Posterior cingulate gyrus (tissue), 11 donors: ENCODE measurements at regions of chr16 and their contacts with region 1.

Region 1: DNA sequence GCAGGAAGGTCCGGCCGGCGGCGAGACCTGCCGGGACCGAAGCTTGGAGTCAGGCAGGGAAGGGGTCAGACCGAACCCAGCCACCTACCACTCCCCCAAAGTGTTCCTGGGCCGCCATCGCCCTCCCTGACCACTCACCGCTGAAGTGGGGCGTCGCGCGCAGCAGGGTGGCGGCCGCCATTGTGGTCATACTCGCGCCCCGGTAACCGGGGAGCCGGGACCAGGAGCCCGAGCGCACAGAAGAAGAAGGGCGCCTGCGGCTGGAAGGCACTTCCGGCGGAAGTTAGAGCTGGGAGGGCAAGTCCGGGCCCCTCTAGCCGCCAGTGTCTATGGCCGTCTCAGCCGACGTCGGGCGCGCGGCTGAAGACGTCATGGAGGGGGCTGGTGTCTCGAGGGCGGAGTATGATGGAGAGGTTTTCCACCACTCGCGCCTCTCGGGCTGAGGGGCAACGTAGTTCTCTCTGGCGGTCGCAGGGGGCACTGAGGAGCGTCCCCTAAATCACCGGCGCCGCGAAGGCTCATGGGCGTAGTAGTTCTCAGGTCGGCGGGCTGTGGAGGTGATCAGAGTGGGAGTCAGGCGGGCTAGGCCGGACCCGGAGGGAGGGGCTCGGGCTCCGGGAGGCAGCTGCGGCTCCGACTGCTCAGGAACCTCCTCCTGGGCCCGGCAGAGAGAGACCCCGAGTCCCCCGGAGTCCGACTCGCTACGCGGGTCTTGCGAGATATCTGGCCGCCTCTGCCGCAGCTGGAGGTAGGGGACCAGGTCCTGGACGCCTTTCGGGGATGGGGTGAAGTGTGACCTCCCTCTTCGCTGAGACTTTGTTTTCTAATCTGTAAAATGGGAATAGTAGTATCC is at the start of gene TUFM:
- DNase-seq: peak; percentile 98 to 100 (median 99)

Region 2: GRCh38 chr16:28211712-28212534 is 634.4 kb before region 1 on chr16 and contains the start of gene XPO6:
- intact Hi-C with region 1: loop called (anchors 10 kb)
- DNase-seq: peak; percentile 92 to 99 (median 96)

Region 3: DNA sequence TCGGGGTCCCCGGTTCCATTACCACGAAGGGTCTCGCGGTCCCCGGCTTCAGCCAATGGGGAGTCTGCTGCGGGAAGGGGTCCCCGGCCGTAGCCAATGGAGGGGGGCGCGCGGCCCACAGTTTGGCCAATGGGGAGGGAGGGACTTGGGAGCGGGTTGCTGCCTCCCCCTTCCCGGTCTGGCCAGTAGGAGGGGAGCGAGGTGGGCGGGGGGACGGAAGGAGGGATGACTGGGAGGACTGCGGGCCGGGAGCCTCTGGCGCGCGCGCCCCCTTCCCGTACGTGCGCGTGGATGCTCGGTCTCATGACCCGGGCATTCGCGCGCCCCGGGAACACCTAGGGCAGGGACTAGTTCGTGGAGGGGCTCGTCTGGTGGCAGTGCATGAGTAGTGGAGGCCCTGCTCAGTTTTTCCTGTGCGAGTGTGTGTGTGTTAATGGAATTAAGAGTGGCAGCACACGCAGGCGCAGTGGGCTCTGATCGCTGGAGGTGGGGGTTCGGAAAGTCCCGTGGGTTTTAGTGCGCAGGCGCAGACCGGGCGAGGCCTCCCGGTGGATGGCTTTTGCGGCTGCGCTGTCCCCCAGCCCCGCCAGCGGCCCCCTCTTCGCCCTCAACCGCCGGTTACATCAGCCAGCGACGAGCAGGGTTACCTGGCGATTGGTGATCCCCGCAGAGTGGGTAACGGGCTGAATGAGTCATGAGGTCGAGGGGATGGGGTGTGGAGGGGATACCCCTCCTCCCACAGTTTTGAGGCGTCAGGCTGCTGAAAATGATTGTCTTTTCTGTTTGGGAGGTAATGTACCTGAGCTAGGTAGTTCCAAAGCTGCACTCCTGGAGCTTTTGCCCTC is 22.2 kb before region 1 on chr16:
- intact Hi-C with region 1: loop called (anchors 1 kb)
- DNase-seq: peak; percentile 89 to 99 (median 96)

Region 4: DNA sequence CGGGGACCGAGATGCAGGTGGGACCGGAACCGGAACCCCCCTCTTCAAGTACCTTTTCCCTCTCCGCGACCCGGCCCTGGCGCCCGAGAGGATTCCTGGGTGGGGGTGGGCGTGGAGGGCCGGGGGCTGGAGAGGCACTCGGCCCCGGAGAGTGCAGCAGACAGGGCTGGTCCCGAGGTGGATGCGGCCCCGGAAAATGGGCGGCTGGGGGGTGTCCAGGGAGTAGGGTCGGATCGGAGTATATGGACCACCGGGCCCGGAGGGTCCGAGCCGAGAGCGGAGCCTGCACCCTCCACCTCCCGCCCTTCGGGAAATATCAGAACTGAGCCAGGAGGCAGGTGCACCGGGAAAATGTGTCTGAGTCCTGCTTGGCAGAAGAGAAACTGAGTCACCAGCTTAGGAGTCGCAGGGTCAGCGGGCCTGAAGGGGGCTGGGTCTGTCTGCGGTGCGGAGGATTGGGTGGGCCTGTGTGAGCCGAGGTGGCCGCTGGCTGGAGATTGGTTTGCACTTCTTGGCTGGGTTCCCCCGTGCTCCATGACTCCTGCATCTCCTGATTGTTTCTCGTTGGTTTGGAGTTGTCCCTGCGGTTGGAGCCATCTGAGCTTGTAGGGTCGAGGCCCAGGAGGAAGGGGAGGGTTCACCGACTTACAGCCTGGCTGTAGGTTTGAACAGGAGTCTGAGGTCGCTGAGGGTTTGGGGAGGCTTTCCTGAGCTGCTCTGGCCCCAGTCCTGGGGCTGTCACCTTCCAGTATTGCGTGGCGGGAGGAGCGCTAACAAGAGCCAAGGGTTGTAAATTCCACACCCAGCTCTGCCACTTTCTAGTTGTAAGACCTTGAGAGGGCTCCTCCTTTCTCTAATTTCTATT is 17.9 kb after region 1 on chr16:
- intact Hi-C with region 1: loop called (anchors 1 kb)
- DNase-seq: peak in 2 of 10 donors; percentile 21 to 78

Region 5: DNA sequence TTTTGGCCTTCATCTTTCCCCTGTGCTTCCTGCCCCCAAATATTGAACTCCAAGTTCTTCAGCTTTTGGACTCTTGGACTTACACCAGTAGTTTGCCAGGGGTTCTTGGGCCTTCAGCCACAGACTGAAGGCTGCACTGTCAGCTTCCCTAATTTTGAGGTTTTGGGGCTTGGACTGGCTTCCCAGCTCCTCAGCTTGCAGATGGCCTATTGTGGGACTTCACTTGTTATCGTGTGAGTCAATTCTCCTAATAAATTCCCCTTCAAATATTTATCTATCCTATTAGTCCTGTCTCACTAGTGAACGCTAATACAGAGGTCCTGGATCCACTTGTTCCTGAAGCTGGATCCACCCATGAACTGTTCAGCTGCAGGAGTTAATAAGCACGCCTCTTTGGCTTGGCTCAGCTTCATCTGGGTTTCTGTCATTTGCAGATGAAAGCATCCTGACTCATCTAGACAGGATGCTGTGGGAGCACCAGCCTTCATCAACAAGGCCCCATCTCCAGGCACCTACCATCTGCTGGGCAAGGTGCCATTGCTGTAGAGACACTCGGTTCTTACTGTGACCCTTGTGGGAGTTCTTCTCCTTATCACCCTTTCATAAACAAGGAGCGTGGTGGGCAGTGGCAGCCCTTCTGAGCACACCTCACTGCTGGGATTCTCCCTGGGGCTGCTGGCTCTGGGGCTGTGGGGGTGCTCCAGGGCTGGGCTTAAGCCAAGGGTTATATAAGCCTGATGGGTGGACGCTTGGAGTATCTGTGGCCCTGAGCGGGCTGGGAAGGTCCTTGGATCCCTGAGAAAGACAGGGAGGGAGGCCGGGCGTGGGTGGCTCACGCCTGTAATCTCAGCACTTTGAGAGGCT is 161.7 kb after region 1 on chr16:
- intact Hi-C with region 1: no loop called
- DNase-seq: peak in 1 of 10 donors; percentile 56